Dorsolateral prefrontal cortex (tissue), 120 donors: ENCODE measurements at regions of chr3 and their contacts with region 1.

Region 1: DNA sequence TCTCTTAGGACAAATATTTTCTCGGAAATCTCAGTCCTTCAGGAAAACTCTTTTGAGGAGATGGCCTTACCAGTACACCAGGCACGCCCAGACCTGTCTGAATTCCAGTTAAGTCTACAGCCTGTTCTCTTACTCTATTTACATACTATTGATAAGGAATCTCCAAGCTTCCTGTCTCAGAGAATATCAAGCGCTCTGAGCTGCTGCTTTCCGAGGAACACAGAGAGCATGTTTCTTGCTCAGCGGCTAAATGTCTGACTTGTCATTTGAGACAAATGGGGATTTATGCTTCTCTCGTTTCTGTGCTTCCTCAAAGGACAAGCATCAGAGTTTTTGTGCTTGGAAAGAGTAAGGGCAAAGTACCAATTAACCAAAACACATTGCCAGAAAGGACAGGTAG is 112.4 kb upstream of the CCDC54 start:
- DNase-seq: no peak
- H3K4me3 ChIP-seq: peak overlapping the region in 21 of 59 donors; percentile 2 to 45 (median 18)
- H3K27ac ChIP-seq: peak overlapping the region in 57 of 59 donors; percentile 4 to 90 (median 71)
- H3K27me3 ChIP-seq: no peaks in the 10 kb centered on the region
- CTCF ChIP-seq: no peak

Region 2: GRCh38 chr3:107249132-107249531 is 15.8 kb before region 1 on chr3:
- intact Hi-C with region 1: loop called in 1 of 2 experiments (anchors 2 kb)
- DNase-seq: no peak
- H3K4me3 ChIP-seq: no peak overlapping the region
- H3K27ac ChIP-seq: no peak overlapping the region
- H3K27me3 ChIP-seq: no peaks in the 10 kb centered on the region
- CTCF ChIP-seq: no peak

Region 3: DNA sequence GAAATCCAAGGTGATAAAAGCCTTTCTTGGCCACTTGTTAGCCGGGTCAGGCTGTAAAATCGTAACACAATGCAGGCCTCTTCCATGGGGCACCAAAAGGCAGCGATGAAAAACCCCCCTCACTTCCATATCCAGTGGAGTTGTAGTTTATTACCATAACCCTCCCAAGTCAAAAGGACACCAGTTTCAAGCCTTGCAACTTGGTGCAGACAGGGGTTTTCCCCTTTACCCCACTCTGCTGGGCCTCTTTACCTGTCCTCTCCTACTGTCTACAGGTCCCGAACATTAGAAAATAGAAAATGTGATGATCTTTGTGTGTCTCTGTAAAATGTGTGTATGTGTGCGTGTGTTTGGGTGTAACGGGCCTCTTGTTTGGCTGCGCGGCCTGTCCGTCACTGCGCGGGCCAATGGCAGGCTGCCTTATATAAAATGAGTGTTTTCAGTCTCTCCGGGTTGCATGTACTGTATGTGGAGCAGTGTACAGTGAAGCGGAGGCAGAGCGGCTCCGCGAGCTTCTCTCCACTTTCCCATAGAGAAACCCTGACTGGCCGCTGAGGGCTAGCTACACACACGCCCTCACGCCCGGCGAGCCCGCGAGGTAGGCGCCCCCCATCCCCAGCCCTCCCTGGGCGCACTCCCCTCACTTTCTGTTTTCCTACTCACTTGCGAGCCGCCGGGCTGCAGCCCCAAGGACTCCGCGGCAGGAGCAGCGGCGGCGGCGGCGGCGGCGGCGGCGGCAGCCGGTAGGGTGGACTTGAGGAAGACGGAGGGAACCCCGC is 257.8 kb after region 1 on chr3 and contains the start of gene BBX:
- intact Hi-C with region 1: loop called in 1 of 2 experiments (anchors 10 kb)
- DNase-seq: peak; percentile 89 to 99 (median 94)
- H3K4me3 ChIP-seq: peak within 1 kb of the TSS; percentile 65 to 94 (median 84)
- H3K27ac ChIP-seq: peak within 1 kb of the TSS; percentile 81 to 99 (median 96)
- H3K27me3 ChIP-seq: no peaks in the 10 kb centered on the region
- CTCF ChIP-seq: peak in 16 of 56 donors; percentile 3 to 44 (median 18)
- total RNA-seq, gene BBX: 42.2 to 147 (median 75.3) TPM